Breast epithelium (tissue), 4 donors: ENCODE measurements at regions of chr9 and their contacts with region 1.

Region 1: GRCh38 chr9:117555964-117556629 is 141.2 kb upstream of the ASTN2 start:
- DNase-seq: peak in 1 of 2 donors; percentile 52
- H3K4me3 ChIP-seq: no peak overlapping the region
- H3K27ac ChIP-seq: no peak overlapping the region
- H3K4me1 ChIP-seq: no peaks in the 10 kb centered on the region
- H3K27me3 ChIP-seq: no peaks in the 10 kb centered on the region
- CTCF ChIP-seq: peak in 1 of 3 donors; percentile 30
- POLR2A ChIP-seq: no peak

Region 2: GRCh38 chr9:117587263-117587662 is 31.2 kb after region 1 on chr9:
- intact Hi-C with region 1: no loop called
- DNase-seq: no peak
- H3K4me3 ChIP-seq: no peak overlapping the region
- H3K27ac ChIP-seq: no peak overlapping the region
- H3K4me1 ChIP-seq: no peaks in the 10 kb centered on the region
- H3K27me3 ChIP-seq: no peaks in the 10 kb centered on the region
- CTCF ChIP-seq: no peak
- POLR2A ChIP-seq: no peak

Region 3: GRCh38 chr9:118209343-118209742 is 653.2 kb after region 1 on chr9:
- intact Hi-C with region 1: loop called (anchors 5 kb)
- DNase-seq: no peak
- H3K4me3 ChIP-seq: no peak overlapping the region
- H3K27ac ChIP-seq: no peak overlapping the region
- H3K4me1 ChIP-seq: no peaks in the 10 kb centered on the region
- H3K27me3 ChIP-seq: no peaks in the 10 kb centered on the region
- CTCF ChIP-seq: no peak
- POLR2A ChIP-seq: no peak

Region 4: DNA sequence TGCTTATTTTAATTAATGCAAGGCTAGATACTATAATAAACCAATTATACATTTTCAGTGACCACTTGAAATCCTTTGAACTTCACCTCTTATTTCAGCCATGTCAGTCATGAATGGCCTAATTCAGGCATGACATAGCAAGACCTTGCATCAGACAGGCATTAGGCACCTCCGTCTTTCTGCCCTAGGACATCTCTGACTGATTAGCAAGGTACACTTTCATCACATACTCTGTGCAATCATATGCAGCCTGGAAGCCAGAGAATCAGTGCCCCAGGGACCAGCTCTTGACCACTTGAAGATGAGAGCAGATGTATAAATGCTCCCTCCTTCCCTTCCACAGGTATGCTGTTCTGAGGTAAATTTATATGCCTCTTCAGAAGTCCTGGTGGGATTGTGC is 1188.7 kb after region 1 on chr9:
- intact Hi-C with region 1: no loop called
- DNase-seq: no peak
- H3K4me3 ChIP-seq: no peak overlapping the region
- H3K27ac ChIP-seq: no peak overlapping the region
- H3K4me1 ChIP-seq: no peaks in the 10 kb centered on the region
- H3K27me3 ChIP-seq: no peaks in the 10 kb centered on the region
- CTCF ChIP-seq: no peak
- POLR2A ChIP-seq: no peak